ENCODE measurements at regions of chr1 and their contacts with region 1.

Region 1: DNA sequence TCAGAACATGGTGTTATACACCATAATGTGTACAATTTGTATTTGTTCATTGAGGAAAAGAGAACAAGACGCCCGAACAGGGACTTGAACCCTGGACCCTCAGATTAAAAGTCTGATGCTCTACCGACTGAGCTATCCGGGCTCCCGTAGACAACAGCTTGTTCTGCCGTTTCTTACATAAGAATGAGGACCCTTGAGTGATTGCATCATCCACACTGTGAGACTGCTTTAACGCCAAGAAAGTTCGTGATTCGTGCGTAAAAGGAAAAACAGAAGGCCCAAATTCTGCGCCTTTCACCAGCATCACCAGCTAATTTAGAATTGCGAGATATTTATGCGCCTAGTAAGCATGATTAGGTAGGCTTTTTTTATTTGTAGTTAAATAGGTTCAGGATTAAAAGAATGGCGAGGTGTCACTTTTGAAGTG is 9.2 kb upstream of the MDM4 start:
- DNase-seq: peak; percentile 83 to 91
- H3K4me3 ChIP-seq: peak overlapping the region; percentile 58
- H3K4me3 Mint-ChIP-seq: peak overlapping the region; percentile 99
- H3K27ac Mint-ChIP-seq: peak overlapping the region; percentile 98
- H3K4me1 ChIP-seq: peaks cover 4% of the 10 kb centered on the region; the same call in 1 of the 2 replicates
- H3K4me1 Mint-ChIP-seq: peaks cover 20% of the 10 kb centered on the region
- H3K27me3 ChIP-seq: no peaks in the 10 kb centered on the region
- H3K27me3 Mint-ChIP-seq: peaks cover 8% of the 10 kb centered on the region
- CTCF ChIP-seq: no peak

Region 2: DNA sequence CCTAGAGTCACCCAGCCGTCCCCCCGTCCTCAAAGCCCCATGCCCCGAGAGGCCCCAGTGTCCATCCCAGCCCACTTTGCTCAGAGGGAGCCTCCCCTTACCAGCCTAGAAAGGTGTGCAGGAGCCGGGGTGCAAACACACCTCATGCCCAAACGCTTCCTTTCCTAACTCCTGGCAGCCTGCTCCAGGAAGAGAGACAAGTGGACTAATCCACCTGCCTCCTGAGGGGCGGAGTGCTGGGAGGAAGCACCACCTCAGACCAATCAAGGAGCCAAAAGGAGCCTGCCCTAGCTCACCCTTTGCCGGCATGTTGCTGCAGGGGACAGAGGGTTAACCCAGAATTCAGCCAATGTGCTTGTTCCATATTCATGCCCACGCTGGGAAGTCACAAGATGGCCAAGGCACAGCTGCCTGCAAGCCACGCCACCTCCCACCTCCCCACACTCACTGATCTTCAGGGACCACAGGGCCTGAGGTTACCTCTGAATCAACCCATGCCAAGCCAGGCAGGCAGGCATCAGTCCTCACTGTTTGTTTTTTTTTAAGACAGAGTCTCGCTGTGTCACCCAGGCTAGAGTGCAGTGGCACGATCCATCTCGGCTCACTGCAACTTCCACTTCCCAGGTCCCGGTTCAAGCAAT is 175.0 kb before region 1 on chr1:
- CTCF ChIA-PET with region 1: no interaction called
- POLR2A ChIA-PET with region 1: no interaction called
- intact Hi-C with region 1: no loop called
- DNase-seq: no peak
- H3K4me3 ChIP-seq: no peak overlapping the region
- H3K4me3 Mint-ChIP-seq: no peak overlapping the region
- H3K27ac Mint-ChIP-seq: no peak overlapping the region
- H3K4me1 ChIP-seq: no peaks in the 10 kb centered on the region
- H3K4me1 Mint-ChIP-seq: peaks cover 7% of the 10 kb centered on the region
- H3K27me3 ChIP-seq: no peaks in the 10 kb centered on the region
- H3K27me3 Mint-ChIP-seq: no peaks in the 10 kb centered on the region
- CTCF ChIP-seq: no peak

Region 3: DNA sequence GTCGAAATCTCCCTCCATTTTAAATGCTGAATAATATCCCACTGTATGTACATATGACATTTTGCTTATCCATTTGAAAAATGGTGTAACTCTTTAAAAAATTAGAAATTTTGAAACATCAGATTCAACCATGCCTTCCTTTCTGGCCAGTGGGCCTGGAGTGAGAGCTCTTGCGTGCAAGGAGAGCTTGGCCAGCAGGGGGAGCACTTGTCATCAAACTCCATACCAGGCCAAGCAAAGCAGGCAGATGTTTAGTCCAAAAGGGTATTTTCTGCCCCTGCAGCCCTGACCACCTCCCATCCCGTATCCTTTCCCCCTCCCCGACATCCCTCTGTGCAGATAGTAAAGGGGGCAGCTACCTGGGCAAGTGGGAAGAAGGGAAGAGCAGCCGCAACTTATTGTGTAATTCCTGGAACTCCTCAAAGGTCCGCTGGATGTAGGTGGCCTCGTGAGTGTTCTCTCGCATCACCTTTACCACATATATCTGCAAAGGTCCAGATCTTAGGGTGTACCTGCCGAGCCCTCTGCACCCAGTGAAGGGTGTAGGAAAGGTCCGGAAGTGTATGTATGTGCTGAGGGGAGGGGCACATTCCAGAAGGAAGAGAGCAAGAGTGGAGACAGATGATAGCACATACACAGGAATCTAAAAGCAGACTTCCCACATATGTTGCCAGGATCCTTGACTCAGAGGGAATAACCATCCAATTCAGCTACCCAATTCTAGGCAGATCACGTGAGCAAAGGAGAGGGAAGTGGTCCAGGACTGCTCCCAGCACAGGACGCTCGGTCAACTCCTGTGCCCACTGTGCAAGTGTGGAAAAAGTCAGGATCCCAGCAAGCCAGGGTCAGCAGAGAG is 75.4 kb before region 1 on chr1:
- CTCF ChIA-PET with region 1: interaction called, 35 read pairs
- POLR2A ChIA-PET with region 1: no interaction called
- intact Hi-C with region 1: loop called (anchors 1 kb)
- DNase-seq: peak; percentile 75 to 80
- H3K4me3 ChIP-seq: no peak overlapping the region
- H3K4me3 Mint-ChIP-seq: no peak overlapping the region
- H3K27ac Mint-ChIP-seq: peak overlapping the region; percentile 4
- H3K4me1 ChIP-seq: peaks cover 5% of the 10 kb centered on the region; the same call in 1 of the 2 replicates
- H3K4me1 Mint-ChIP-seq: peaks cover 7% of the 10 kb centered on the region
- H3K27me3 ChIP-seq: no peaks in the 10 kb centered on the region
- H3K27me3 Mint-ChIP-seq: no peaks in the 10 kb centered on the region
- CTCF ChIP-seq: peak; percentile 94 to 97

Region 4: GRCh38 chr1:204446370-204447111 is 60.4 kb before region 1 on chr1:
- CTCF ChIA-PET with region 1: interaction called, 48 read pairs
- POLR2A ChIA-PET with region 1: no interaction called
- intact Hi-C with region 1: loop called (anchors 1 kb)
- DNase-seq: peak; percentile 75 to 81
- H3K4me3 ChIP-seq: no peak overlapping the region
- H3K4me3 Mint-ChIP-seq: no peak overlapping the region
- H3K27ac Mint-ChIP-seq: peak overlapping the region; percentile 52
- H3K4me1 ChIP-seq: peaks cover 26% of the 10 kb centered on the region
- H3K4me1 Mint-ChIP-seq: peaks cover 13% of the 10 kb centered on the region
- H3K27me3 ChIP-seq: no peaks in the 10 kb centered on the region
- H3K27me3 Mint-ChIP-seq: no peaks in the 10 kb centered on the region
- CTCF ChIP-seq: peak; percentile 74 to 90

Region 5: DNA sequence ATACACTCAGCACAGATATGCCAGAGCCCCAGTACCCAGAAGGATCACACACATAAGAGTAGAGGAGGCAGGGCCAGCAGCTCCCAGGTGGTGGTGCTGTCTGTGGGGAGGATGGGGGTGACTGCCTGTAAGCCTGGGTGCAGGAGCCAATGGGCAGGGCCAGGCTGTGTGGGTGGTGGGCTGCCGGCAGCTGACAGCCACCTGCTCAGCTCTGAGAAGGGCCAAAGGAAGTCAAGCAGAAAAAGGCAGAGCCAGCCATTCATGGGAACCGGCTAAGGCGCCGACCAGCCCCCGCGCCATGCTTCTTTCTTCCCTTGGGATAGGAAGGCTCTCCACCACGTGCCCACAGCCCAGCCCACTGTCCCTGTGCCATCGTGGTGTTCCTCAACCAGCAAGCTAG is 26.5 kb before region 1 on chr1:
- CTCF ChIA-PET with region 1: interaction called, 25 read pairs
- POLR2A ChIA-PET with region 1: no interaction called
- intact Hi-C with region 1: loop called (anchors 1 kb)
- DNase-seq: no peak
- H3K4me3 ChIP-seq: no peak overlapping the region
- H3K4me3 Mint-ChIP-seq: no peak overlapping the region
- H3K27ac Mint-ChIP-seq: no peak overlapping the region
- H3K4me1 ChIP-seq: peaks cover 14% of the 10 kb centered on the region; the same call in 1 of the 2 replicates
- H3K4me1 Mint-ChIP-seq: peaks cover 16% of the 10 kb centered on the region
- H3K27me3 ChIP-seq: no peaks in the 10 kb centered on the region
- H3K27me3 Mint-ChIP-seq: no peaks in the 10 kb centered on the region
- CTCF ChIP-seq: no peak

Region 6: DNA sequence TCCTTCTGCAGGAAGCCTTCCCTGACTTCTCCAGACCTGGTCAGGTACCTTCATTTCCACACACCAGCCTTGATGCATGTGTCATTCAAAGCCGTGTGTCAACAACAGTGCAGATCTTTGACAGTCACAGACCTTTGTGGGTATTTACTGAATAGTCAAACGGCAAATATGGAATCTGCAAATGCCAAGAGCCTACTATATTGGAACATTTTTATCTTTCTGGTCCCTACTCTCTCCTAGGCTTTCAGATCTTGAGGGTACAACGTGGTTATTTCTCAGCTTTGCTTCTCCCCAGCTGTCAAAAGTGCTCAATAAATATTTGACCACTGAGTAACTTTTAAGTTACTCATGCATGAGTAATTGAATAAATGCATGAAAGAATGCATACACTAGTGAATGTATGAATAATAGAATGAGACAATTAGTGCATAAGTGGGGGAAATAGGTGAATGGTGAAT is 84.6 kb after region 1 on chr1:
- CTCF ChIA-PET with region 1: no interaction called
- POLR2A ChIA-PET with region 1: no interaction called
- intact Hi-C with region 1: no loop called
- DNase-seq: no peak
- H3K4me3 ChIP-seq: no peak overlapping the region
- H3K4me3 Mint-ChIP-seq: no peak overlapping the region
- H3K27ac Mint-ChIP-seq: no peak overlapping the region
- H3K4me1 ChIP-seq: peaks cover 14% of the 10 kb centered on the region
- H3K4me1 Mint-ChIP-seq: peaks cover 15% of the 10 kb centered on the region
- H3K27me3 ChIP-seq: no peaks in the 10 kb centered on the region
- H3K27me3 Mint-ChIP-seq: no peaks in the 10 kb centered on the region
- CTCF ChIP-seq: no peak